CD4-positive, alpha-beta T cell (primary cell): ENCODE measurements at regions of chr19 and their contacts with region 1.

Region 1: GRCh38 chr19:21151460-21151859 is 9.6 kb downstream of the ZNF431 start:
- DNase-seq: no peak
- ATAC-seq: no peak
- H3K4me3 ChIP-seq: no peak overlapping the region
- H3K4me3 Mint-ChIP-seq: no peak overlapping the region
- H3K27ac ChIP-seq: no peak overlapping the region
- H3K27ac Mint-ChIP-seq: no peak overlapping the region
- H3K4me1 ChIP-seq: no peaks in the 10 kb centered on the region
- H3K4me1 Mint-ChIP-seq: peaks cover 47% of the 10 kb centered on the region
- H3K27me3 ChIP-seq: no peaks in the 10 kb centered on the region
- H3K27me3 Mint-ChIP-seq: no peaks in the 10 kb centered on the region
- CTCF ChIP-seq: no peak

Region 2: GRCh38 chr19:21087871-21088270 is 63.6 kb before region 1 on chr19:
- CTCF ChIA-PET with region 1: no interaction called
- POLR2A ChIA-PET with region 1: no interaction called
- intact Hi-C with region 1: loop called in 1 of 2 experiments (anchors 2 kb)
- DNase-seq: no peak
- ATAC-seq: no peak
- H3K4me3 ChIP-seq: no peak overlapping the region
- H3K4me3 Mint-ChIP-seq: no peak overlapping the region
- H3K27ac ChIP-seq: no peak overlapping the region
- H3K27ac Mint-ChIP-seq: no peak overlapping the region
- H3K4me1 ChIP-seq: peaks cover 4% of the 10 kb centered on the region
- H3K4me1 Mint-ChIP-seq: no peaks in the 10 kb centered on the region
- H3K27me3 ChIP-seq: no peaks in the 10 kb centered on the region
- H3K27me3 Mint-ChIP-seq: no peaks in the 10 kb centered on the region
- CTCF ChIP-seq: no peak